Naive thymus-derived CD8-positive, alpha-beta T cell (primary cell): ENCODE measurements at regions of chr1 and their contacts with region 1.

Region 1: DNA sequence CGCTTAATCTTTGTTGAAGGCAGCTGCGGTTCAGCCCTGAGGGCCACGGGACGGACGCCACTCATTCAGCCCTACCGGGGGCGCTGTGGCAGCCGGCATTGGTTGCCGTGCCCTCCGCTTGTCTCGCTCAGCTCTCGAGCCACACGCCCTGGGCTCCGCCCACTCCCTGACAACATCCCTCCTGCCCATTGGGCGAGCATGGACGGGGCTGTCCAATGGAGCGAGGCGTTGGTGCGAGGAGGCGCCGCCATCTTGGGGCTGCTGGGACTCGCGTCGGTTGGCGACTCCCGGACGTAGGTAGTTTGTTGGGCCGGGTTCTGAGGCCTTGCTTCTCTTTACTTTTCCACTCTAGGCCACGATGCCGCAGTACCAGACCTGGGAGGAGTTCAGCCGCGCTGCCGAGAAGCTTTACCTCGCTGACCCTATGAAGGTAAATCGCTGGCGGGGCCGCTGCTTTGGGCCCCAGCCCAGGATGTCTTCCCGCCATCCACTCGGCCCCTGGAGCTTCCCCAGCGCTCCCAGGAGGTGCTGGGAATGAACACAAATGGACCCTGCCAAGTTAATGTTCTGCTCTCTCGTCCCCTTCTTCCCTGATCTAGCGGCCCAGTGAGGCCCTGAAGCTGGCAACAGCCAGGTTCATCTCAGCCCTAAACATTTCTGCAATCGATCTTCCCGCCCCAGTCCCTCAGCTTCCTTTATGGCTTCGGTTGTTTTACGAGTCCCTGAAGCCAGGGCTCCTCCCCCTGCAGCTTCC is at the start of gene SRP9:
- DNase-seq: peak; percentile 95 to 100 (median 99)
- ATAC-seq: peak; percentile 92
- H3K4me3 Mint-ChIP-seq: no peak within 1 kb of the TSS
- H3K27ac Mint-ChIP-seq: no peak within 1 kb of the TSS
- H3K4me1 Mint-ChIP-seq: peaks cover 23 to 58% (median 49%) of the 10 kb centered on the region in 4 donors
- H3K27me3 Mint-ChIP-seq: no peaks in the 10 kb centered on the region
- polyA plus RNA-seq, gene SRP9: 273 to 350 (median 288) TPM

Region 2: DNA sequence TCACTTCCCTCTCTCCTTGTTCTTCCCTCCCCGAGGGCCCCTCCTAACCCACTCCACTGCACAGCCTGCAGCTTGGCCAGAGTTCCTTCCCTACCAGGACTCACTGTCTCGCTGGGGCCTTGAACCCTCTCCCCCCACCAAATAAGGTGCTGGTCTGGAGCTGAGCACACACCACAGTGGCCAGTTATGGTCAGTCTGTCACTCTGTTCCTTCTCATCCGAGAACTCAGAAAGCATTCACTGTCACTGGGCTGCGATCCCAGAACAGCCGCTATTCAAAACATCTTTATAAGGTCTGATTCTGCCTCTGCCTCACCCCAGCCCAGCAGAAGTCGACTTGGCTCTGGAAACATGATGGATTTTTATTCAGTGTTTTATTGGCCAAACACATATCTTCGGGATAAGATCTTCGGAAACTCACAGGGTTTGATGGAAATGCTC is 330.1 kb before region 1 on chr1:
- POLR2A ChIA-PET with region 1: interaction called, 14 read pairs
- DNase-seq: peak in 1 of 10 donors; percentile 5
- ATAC-seq: no peak
- H3K4me3 Mint-ChIP-seq: no peak overlapping the region
- H3K27ac Mint-ChIP-seq: peak overlapping the region in 4 of 10 donors; percentile 46 to 91 (median 56)
- H3K4me1 Mint-ChIP-seq: peaks cover 26 to 70% (median 68%) of the 10 kb centered on the region in 4 donors
- H3K27me3 Mint-ChIP-seq: no peaks in the 10 kb centered on the region

Region 3: GRCh38 chr1:225652729-225653462 is 124.9 kb before region 1 on chr1 and contains the start of gene ENAH:
- POLR2A ChIA-PET with region 1: interaction called, 10 read pairs
- DNase-seq: peak in 6 of 10 donors; percentile 6 to 34 (median 29)
- ATAC-seq: peak; percentile 62 to 75
- H3K4me3 Mint-ChIP-seq: peak within 1 kb of the TSS; percentile 79 to 100 (median 88)
- H3K27ac Mint-ChIP-seq: peak within 1 kb of the TSS in 7 of 10 donors; percentile 7 to 83 (median 75)
- H3K4me1 Mint-ChIP-seq: peaks cover 8 to 21% (median 15%) of the 10 kb centered on the region in 4 donors
- H3K27me3 Mint-ChIP-seq: peaks cover 20 to 47% (median 27%) of the 10 kb centered on the region in 5 donors
- polyA plus RNA-seq, gene ENAH: 0.07 TPM in 1 of 3 donors, not detected in the others

Region 4: DNA sequence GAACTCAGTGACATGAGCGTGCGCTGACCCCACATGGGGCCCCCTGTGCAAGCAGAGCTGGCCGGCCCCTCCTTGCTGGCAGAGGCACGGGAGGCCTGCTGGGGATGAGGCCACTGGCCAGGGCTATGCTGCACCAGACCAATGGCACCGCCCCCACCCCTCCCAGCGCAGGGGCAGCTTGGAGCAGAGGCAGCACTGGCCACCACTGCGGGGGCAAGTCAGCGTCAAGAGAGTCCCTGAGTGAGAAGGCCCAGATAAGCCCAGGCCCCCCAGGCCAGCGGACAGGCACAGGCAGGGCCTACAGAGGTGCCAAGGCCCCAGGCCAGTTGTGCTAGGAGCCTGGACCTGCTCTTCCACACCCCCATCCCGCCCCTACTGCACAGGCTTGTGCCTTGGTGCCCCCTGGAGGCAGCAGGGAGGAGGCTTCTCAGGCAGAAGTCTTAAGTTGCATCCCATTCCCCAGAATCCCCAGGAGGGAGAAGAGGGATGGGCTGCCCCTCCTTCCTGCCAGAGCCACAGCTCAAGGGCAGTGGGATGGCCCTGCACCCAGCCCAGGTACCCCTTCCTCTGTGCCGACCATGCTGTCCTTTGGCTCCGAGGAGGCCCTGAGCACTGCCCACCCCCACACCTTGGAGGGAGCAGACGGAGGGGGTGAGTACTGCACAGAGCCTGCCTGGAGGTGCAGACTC is 68.0 kb after region 1 on chr1:
- POLR2A ChIA-PET with region 1: interaction called, 36 read pairs
- DNase-seq: peak in 3 of 10 donors; percentile 30 to 38 (median 35)
- ATAC-seq: no peak
- H3K4me3 Mint-ChIP-seq: peak overlapping the region in 2 of 10 donors; percentile 6 to 19
- H3K27ac Mint-ChIP-seq: peak overlapping the region in 9 of 10 donors; percentile 46 to 96 (median 81)
- H3K4me1 Mint-ChIP-seq: peaks cover 38 to 80% (median 71%) of the 10 kb centered on the region in 4 donors
- H3K27me3 Mint-ChIP-seq: no peaks in the 10 kb centered on the region

Region 5: DNA sequence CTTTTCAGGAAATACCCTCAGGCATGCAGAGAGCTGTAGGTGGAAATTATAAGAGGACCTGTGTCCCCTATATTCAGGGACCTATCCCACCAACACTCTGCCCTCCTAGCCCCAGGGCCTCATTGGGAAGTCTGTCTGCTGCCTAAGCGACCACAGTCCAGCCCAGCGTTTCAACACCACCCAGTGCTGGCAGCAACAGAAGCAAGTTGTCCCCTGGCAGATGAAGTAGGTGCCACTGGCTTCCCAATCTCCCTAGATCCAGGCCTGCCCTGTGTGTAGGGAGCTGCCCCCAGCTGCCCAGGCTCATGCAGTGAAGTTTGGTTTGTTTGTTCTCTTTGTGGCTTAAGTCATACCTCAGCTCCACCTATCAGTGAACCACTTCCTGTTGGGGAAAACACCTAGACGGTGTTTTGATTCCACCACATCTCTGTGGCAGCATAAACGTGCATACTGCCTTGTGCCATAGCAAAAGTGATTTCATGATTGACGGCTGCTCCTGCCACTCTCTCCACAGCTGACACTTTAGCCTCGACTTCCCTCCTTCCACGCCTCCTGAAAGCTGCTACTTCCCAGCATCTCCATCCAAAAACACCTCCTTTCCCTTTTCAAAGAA is 119.3 kb after region 1 on chr1:
- POLR2A ChIA-PET with region 1: interaction called, 43 read pairs
- DNase-seq: peak; percentile 21 to 92 (median 80)
- ATAC-seq: peak; percentile 88 to 92
- H3K4me3 Mint-ChIP-seq: peak overlapping the region; percentile 59 to 89 (median 82)
- H3K27ac Mint-ChIP-seq: peak overlapping the region; percentile 94 to 100 (median 97)
- H3K4me1 Mint-ChIP-seq: peaks cover 27 to 64% (median 60%) of the 10 kb centered on the region in 4 donors
- H3K27me3 Mint-ChIP-seq: no peaks in the 10 kb centered on the region

Region 6: GRCh38 chr1:225999227-225999911 is 221.6 kb after region 1 on chr1 and contains the start of gene SDE2:
- POLR2A ChIA-PET with region 1: interaction called, 23 read pairs
- DNase-seq: peak; percentile 98 to 100 (median 100)
- ATAC-seq: peak; percentile 66 to 73
- H3K4me3 Mint-ChIP-seq: peak within 1 kb of the TSS; percentile 88 to 100 (median 100)
- H3K27ac Mint-ChIP-seq: peak within 1 kb of the TSS; percentile 97 to 100 (median 100)
- H3K4me1 Mint-ChIP-seq: peaks cover 41 to 89% (median 78%) of the 10 kb centered on the region in 4 donors
- H3K27me3 Mint-ChIP-seq: peaks cover 0 to 3% (median 0%) of the 10 kb centered on the region in 5 donors
- polyA plus RNA-seq, gene SDE2: 5.1 to 12.0 (median 7.2) TPM